Activated CD4-positive, alpha-beta memory T cell treated with anti-CD3 and anti-CD28 coated beads for 36 hours (primary cell): ENCODE measurements at regions of chr20 and their contacts with region 1.

Region 1: GRCh38 chr20:5191829-5192569 is 65.2 kb downstream of the CDS2 start:
- DNase-seq: peak; percentile 49
- H3K4me3 Mint-ChIP-seq: no peak overlapping the region
- H3K27ac Mint-ChIP-seq: peak overlapping the region; percentile 73
- H3K4me1 Mint-ChIP-seq: peaks cover 24% of the 10 kb centered on the region
- H3K27me3 Mint-ChIP-seq: no peaks in the 10 kb centered on the region

Region 2: GRCh38 chr20:5119435-5120188 is 72.4 kb before region 1 on chr20 and contains the start of gene PCNA:
- CTCF ChIA-PET with region 1: interaction called, 208 read pairs
- POLR2A ChIA-PET with region 1: interaction called, 14 read pairs
- intact Hi-C with region 1: loop called (anchors 1 kb)
- DNase-seq: peak; percentile 99
- H3K4me3 Mint-ChIP-seq: peak within 1 kb of the TSS; percentile 90
- H3K27ac Mint-ChIP-seq: peak within 1 kb of the TSS; percentile 95
- H3K4me1 Mint-ChIP-seq: peaks cover 47% of the 10 kb centered on the region
- H3K27me3 Mint-ChIP-seq: no peaks in the 10 kb centered on the region
- total RNA-seq, gene PCNA: 554 to 560 TPM

Region 3: DNA sequence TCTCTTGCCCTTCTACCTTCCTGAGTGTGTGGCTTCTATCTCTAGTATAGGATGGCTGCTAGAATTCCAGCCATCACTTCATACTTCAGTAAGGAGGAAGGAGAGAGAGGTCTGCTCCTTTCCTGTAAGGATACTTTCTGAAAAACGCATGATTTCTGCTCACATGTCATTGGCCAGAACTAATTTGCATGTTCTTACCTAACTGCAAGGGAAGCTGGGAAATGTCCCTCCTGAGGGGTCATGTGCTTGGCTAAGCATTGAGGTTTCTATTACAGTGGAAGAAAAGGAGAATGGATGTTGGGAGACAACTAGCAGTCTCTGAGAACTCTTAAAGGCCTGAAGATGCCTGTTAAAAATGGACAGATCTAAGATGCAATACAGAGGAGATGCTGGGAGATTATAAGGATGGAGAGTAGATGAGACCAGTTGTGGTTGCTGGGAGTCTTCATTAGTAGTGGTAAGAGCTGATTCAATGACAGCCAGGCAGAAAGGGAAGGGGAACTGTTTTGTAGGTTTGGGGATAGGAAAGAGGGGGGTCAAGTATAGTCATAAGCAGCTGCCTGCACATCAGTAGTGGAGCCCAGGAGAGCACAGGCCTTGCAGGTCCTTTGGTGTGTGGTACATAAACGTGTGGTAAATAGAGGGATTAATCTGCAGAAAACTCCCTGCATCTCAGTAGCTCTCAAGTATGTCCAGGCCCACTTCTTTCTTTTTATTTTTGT is 45.0 kb before region 1 on chr20:
- CTCF ChIA-PET with region 1: interaction called, 11 read pairs
- POLR2A ChIA-PET with region 1: interaction called, 4 read pairs
- intact Hi-C with region 1: no loop called
- DNase-seq: no peak
- H3K4me3 Mint-ChIP-seq: no peak overlapping the region
- H3K27ac Mint-ChIP-seq: no peak overlapping the region
- H3K4me1 Mint-ChIP-seq: peaks cover 65% of the 10 kb centered on the region
- H3K27me3 Mint-ChIP-seq: no peaks in the 10 kb centered on the region

Region 4: GRCh38 chr20:5181492-5181891 is 10.5 kb before region 1 on chr20:
- CTCF ChIA-PET with region 1: interaction called, 12 read pairs
- POLR2A ChIA-PET with region 1: no interaction called
- intact Hi-C with region 1: no loop called
- DNase-seq: no peak
- H3K4me3 Mint-ChIP-seq: no peak overlapping the region
- H3K27ac Mint-ChIP-seq: no peak overlapping the region
- H3K4me1 Mint-ChIP-seq: peaks cover 2% of the 10 kb centered on the region
- H3K27me3 Mint-ChIP-seq: no peaks in the 10 kb centered on the region

Region 5: DNA sequence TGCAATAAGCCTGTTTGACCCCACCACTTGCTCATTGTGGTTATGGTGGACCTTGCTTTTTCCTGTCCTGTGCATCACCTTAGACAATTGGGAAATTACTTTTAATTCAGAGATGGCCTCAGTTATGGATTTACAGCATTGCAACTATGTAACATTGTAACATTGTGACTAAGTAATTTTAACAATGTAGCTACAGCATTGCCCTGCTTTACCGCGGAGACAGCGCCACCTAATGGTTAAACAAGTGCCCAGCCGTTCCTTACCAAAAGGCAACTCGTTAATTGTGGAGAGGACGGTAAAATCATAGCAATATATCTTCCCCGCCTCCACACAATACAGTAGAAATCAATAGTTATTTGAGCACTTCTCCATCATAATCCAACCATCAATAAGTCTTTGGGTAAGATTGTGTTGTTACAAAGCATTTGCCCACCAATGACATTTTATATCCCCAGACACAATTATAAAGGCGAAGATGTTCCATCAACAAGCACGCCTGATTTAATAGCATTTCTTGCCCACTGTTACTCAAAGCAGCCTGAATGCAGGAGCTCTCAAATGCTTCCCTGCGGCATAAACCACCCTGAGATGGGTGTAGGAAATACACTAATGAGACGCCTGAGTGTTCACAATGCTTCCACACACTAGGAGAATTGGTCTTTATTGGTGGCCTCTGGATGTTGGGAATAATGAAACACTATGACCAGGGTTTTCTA is 31.1 kb after region 1 on chr20:
- CTCF ChIA-PET with region 1: interaction called, 12 read pairs
- POLR2A ChIA-PET with region 1: no interaction called
- intact Hi-C with region 1: no loop called
- DNase-seq: peak; percentile 76
- H3K4me3 Mint-ChIP-seq: no peak overlapping the region
- H3K27ac Mint-ChIP-seq: no peak overlapping the region
- H3K4me1 Mint-ChIP-seq: no peaks in the 10 kb centered on the region
- H3K27me3 Mint-ChIP-seq: no peaks in the 10 kb centered on the region